Activated CD4-positive, alpha-beta memory T cell treated with anti-CD3 and anti-CD28 coated beads for 36 hours (primary cell): ENCODE measurements at regions of chr6 and their contacts with region 1.

Region 1: GRCh38 chr6:149028767-149029405 is 282.1 kb downstream of the UST start:
- DNase-seq: peak; percentile 65
- H3K4me3 Mint-ChIP-seq: peak overlapping the region; percentile 47
- H3K27ac Mint-ChIP-seq: peak overlapping the region; percentile 72
- H3K4me1 Mint-ChIP-seq: peaks cover 48% of the 10 kb centered on the region
- H3K27me3 Mint-ChIP-seq: no peaks in the 10 kb centered on the region

Region 2: GRCh38 chr6:148760568-148761526 is 268.0 kb before region 1 on chr6:
- CTCF ChIA-PET with region 1: interaction called, 3 read pairs
- POLR2A ChIA-PET with region 1: no interaction called
- intact Hi-C with region 1: loop called (anchors 5 kb)
- DNase-seq: peak; percentile 75
- H3K4me3 Mint-ChIP-seq: peak overlapping the region; percentile 65
- H3K27ac Mint-ChIP-seq: peak overlapping the region; percentile 88
- H3K4me1 Mint-ChIP-seq: peaks cover 73% of the 10 kb centered on the region
- H3K27me3 Mint-ChIP-seq: peaks cover 8% of the 10 kb centered on the region

Region 3: DNA sequence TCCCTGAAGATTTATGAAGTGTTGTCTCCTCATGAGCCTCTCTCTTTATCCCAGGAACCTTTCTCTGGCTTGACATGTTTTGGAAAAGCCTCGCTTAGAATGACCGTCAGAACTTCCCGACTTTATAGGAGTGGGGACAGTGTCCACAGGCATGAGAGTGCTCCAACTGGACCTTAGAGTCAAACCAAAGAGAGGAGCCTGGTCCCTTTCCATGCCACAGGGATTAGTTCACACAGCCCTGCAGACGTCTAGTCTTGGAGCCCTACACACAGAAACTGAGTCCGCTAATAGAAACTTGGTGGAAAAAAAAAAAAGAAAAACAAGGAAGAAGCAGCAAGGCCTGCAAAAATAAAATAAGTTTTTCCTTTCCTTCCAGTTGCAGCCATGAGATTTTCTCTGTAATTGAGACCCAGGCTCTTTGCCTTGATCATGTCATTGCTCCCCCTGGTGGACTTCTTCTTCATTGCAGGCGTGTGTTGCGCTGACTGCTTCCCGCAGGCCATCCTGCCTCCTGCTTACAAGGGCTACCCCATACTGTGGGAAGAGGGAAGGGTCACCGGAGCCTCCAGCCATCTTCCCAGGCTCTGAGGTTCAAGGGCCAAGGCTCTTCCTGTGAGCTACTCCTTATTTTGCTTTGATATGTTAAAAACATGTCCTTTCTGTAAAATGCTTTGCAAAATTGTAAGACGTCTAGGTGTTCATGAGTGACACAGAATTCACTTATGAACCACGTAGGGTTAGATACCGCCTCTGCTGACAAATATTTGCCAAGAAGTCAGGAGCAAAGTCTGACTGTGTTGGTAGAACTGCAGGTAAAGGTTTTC is 81.1 kb before region 1 on chr6:
- CTCF ChIA-PET with region 1: no interaction called
- POLR2A ChIA-PET with region 1: no interaction called
- intact Hi-C with region 1: no loop called
- DNase-seq: peak; percentile 86
- H3K4me3 Mint-ChIP-seq: no peak overlapping the region
- H3K27ac Mint-ChIP-seq: no peak overlapping the region
- H3K4me1 Mint-ChIP-seq: peaks cover 17% of the 10 kb centered on the region
- H3K27me3 Mint-ChIP-seq: no peaks in the 10 kb centered on the region

Region 4: GRCh38 chr6:149065658-149066556 is 37.0 kb after region 1 on chr6:
- CTCF ChIA-PET with region 1: interaction called, 8 read pairs
- POLR2A ChIA-PET with region 1: interaction called, 35 read pairs
- intact Hi-C with region 1: no loop called
- DNase-seq: peak; percentile 57
- H3K4me3 Mint-ChIP-seq: peak overlapping the region; percentile 33
- H3K27ac Mint-ChIP-seq: peak overlapping the region; percentile 93
- H3K4me1 Mint-ChIP-seq: peaks cover 50% of the 10 kb centered on the region
- H3K27me3 Mint-ChIP-seq: no peaks in the 10 kb centered on the region

Region 5: GRCh38 chr6:149140137-149140909 is 111.4 kb after region 1 on chr6:
- CTCF ChIA-PET with region 1: no interaction called
- POLR2A ChIA-PET with region 1: interaction called, 6 read pairs
- intact Hi-C with region 1: loop called (anchors 1 kb)
- DNase-seq: peak; percentile 93
- H3K4me3 Mint-ChIP-seq: peak overlapping the region; percentile 78
- H3K27ac Mint-ChIP-seq: peak overlapping the region; percentile 96
- H3K4me1 Mint-ChIP-seq: peaks cover 58% of the 10 kb centered on the region
- H3K27me3 Mint-ChIP-seq: no peaks in the 10 kb centered on the region

Region 6: GRCh38 chr6:149316798-149317655 is 288.1 kb after region 1 on chr6:
- CTCF ChIA-PET with region 1: interaction called, 4 read pairs
- POLR2A ChIA-PET with region 1: interaction called, 48 read pairs
- intact Hi-C with region 1: loop called (anchors 1 kb)
- DNase-seq: peak; percentile 93
- H3K4me3 Mint-ChIP-seq: peak overlapping the region; percentile 93
- H3K27ac Mint-ChIP-seq: peak overlapping the region; percentile 97
- H3K4me1 Mint-ChIP-seq: peaks cover 24% of the 10 kb centered on the region
- H3K27me3 Mint-ChIP-seq: no peaks in the 10 kb centered on the region

Region 7: DNA sequence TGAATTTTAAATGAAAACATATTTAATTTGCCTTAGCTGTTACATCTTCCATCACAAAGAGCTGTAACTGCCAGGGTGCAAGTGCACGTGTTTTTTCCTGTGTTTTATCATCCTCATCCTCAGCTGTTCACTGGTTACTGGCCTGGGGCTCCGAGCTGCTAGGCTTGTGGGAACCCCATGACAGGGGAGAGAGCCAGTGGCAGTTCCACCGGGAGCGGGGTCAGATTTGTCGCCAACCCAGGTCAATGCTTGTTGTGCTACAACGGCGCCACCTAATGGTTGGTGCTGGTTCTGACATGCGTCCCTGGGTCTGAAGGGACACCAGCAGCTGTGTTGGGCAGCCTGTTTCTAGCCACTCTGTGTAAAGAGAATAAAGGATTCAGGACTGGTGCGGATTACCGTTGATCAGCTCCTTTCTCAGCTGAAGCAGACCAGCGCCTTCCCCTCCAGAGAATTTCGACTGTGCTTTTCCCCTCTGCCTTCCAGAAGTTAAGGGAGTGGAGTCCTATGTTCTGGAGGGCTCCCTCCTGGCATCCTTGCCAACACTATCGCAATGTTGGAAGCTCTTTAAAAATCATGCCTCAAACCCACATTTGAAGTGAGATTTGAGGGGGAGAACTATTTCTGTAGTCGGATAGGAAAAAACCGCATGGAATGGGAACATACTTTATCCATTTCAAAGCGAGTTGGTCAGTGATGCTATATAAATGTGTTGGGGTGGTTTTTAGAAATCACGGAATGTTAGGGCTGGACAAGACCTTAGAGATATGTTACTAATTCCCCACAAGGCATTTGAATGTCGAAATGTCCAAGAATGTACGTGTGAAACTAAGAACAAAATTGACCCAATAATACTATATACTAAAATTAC is 403.3 kb after region 1 on chr6:
- CTCF ChIA-PET with region 1: interaction called, 116 read pairs
- POLR2A ChIA-PET with region 1: interaction called, 4 read pairs
- intact Hi-C with region 1: loop called (anchors 1 kb)
- DNase-seq: peak; percentile 95
- H3K4me3 Mint-ChIP-seq: no peak overlapping the region
- H3K27ac Mint-ChIP-seq: peak overlapping the region; percentile 58
- H3K4me1 Mint-ChIP-seq: peaks cover 5% of the 10 kb centered on the region
- H3K27me3 Mint-ChIP-seq: no peaks in the 10 kb centered on the region